GM13976 (cell line): ENCODE measurements at regions of chr10 and their contacts with region 1.

Region 1: DNA sequence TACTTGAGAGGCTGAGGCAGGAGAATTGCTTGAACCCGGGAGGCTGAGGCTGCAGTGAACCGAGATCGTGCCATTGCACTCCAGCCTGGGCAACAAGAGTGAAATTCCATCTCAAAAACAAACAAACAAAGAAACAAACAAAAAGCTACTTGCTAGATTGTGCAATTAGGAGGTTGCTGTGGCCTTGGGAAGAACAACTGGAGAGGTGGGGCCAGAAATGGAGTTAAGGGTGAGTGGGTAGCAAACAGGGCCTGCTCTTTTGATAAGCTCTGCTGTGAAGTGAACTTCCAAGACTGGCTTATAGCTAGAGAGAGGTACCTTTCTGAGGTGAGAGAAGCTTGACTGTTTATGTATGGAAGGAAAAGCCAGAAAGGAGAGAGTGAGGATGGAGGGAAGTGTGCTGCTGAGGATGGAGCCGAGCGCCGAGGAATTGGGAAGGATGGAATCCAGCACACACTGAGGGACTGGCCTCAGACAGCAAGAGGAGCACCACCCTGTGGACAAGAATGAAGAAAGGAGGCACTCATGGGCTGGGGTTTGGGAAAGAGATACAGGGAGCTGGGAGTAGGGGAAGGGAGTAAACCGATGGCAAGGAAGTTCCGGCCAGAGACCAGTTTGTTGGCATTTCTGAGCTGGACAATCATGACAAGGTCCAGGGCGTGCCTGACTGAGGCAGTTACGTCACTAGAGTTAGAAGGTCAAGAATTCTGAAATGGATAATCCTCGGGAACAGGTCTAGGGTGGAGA is 7.0 kb upstream of the RPEL1 start:
- DNase-seq: no peak
- CTCF ChIP-seq: peak; percentile 8

Region 2: GRCh38 chr10:102819060-102819459 is 419.6 kb before region 1 on chr10:
- in situ Hi-C with region 1: no loop called
- DNase-seq: no peak
- CTCF ChIP-seq: no peak

Region 3: GRCh38 chr10:102917962-102918816 is 320.5 kb before region 1 on chr10 and contains the start of gene CNNM2:
- in situ Hi-C with region 1: loop called (anchors 10 kb)
- DNase-seq: peak; percentile 98
- CTCF ChIP-seq: no peak